ENCODE measurements at regions of chr11 and their contacts with region 1.

Region 1: GRCh38 chr11:124402326-124402922 is 3.6 kb upstream of the OR8B3 start:
- DNase-seq: peak; percentile 86
- ATAC-seq: peak; percentile 95
- H3K4me3 ChIP-seq: no peak overlapping the region
- H3K27ac ChIP-seq: no peak overlapping the region
- H3K4me1 ChIP-seq: peaks cover 3% of the 10 kb centered on the region; the same call in 1 of the 2 replicates
- H3K27me3 ChIP-seq: no peaks in the 10 kb centered on the region; the same call in 1 of the 2 replicates
- CTCF ChIP-seq: peak; percentile 86
- POLR2A ChIP-seq: no peak
- RAD21 ChIP-seq: peak; percentile 63

Region 2: GRCh38 chr11:124285610-124286344 is 116.6 kb before region 1 on chr11:
- CTCF ChIA-PET with region 1: no interaction called
- POLR2A ChIA-PET with region 1: no interaction called
- dilution Hi-C with region 1: no loop called
- in situ Hi-C with region 1: no loop called
- intact Hi-C with region 1: loop called (anchors 5 kb)
- DNase-seq: peak; percentile 75
- ATAC-seq: peak; percentile 94
- H3K4me3 ChIP-seq: no peak overlapping the region
- H3K27ac ChIP-seq: no peak overlapping the region
- H3K4me1 ChIP-seq: no peaks in the 10 kb centered on the region
- H3K27me3 ChIP-seq: no peaks in the 10 kb centered on the region
- CTCF ChIP-seq: no peak
- POLR2A ChIP-seq: no peak
- RAD21 ChIP-seq: no peak

Region 3: GRCh38 chr11:124470516-124471227 is 68.2 kb after region 1 on chr11:
- CTCF ChIA-PET with region 1: no interaction called
- POLR2A ChIA-PET with region 1: no interaction called
- dilution Hi-C with region 1: no loop called
- in situ Hi-C with region 1: no loop called
- intact Hi-C with region 1: no loop called
- DNase-seq: no peak
- ATAC-seq: no peak
- H3K4me3 ChIP-seq: no peak overlapping the region
- H3K27ac ChIP-seq: no peak overlapping the region
- H3K4me1 ChIP-seq: no peaks in the 10 kb centered on the region
- H3K27me3 ChIP-seq: peaks cover 10% of the 10 kb centered on the region
- CTCF ChIP-seq: no peak
- POLR2A ChIP-seq: no peak
- RAD21 ChIP-seq: no peak

Region 4: GRCh38 chr11:124586238-124586860 is 183.9 kb after region 1 on chr11:
- CTCF ChIA-PET with region 1: interaction called, 10 read pairs
- POLR2A ChIA-PET with region 1: no interaction called
- dilution Hi-C with region 1: no loop called
- in situ Hi-C with region 1: no loop called
- intact Hi-C with region 1: no loop called
- DNase-seq: peak; percentile 66
- ATAC-seq: no peak; the same call in 1 of the 2 replicates
- H3K4me3 ChIP-seq: no peak overlapping the region
- H3K27ac ChIP-seq: no peak overlapping the region
- H3K4me1 ChIP-seq: no peaks in the 10 kb centered on the region
- H3K27me3 ChIP-seq: peaks cover 25% of the 10 kb centered on the region
- CTCF ChIP-seq: peak; percentile 76
- POLR2A ChIP-seq: no peak
- RAD21 ChIP-seq: peak; percentile 60

Region 5: DNA sequence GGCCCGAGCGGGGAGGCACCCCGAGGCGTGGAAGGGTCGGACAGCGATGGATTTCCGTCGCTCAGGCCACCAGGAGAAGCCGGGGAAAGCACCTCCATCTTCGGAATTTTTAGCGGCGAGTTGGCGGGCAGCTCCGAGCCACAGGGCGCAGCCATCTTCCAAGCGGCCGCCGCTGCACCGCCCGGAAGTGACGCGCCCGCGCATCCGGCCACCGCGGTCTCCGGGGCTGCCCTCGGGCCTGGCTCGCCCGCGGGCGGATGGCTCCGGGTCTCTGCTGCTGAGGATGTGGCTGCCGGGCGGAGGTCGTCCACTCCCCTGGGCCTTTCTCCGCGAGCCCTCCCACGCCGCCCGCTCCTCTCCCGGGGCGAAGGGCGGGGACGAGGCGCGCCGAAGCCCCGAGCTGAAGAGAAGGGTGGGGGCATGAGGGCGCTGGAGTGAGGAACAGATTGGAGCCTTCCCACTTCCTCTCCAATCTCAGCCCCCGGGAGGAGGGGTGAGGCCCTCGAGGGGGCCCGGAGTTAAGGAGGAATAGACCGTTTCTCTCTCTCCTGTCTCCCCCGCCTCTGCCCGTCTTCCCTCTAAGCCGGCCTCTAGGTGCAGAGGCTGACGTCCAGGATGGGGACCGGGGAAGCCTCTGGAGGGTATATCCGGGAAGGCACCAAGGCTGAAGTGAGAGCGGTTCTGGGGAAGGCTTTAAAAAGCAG is 398.0 kb after region 1 on chr11 and contains the start of gene MSANTD2:
- CTCF ChIA-PET with region 1: no interaction called
- POLR2A ChIA-PET with region 1: no interaction called
- dilution Hi-C with region 1: no loop called
- in situ Hi-C with region 1: loop called (anchors 25 kb)
- intact Hi-C with region 1: no loop called
- DNase-seq: peak; percentile 79
- ATAC-seq: peak; percentile 92
- H3K4me3 ChIP-seq: peak within 1 kb of the TSS; percentile 68
- H3K27ac ChIP-seq: peak within 1 kb of the TSS; percentile 99
- H3K4me1 ChIP-seq: peaks cover 2% of the 10 kb centered on the region
- H3K27me3 ChIP-seq: no peaks in the 10 kb centered on the region
- CTCF ChIP-seq: no peak
- POLR2A ChIP-seq: peak; percentile 93
- RAD21 ChIP-seq: no peak
- total RNA-seq, gene MSANTD2: 5.0 and 6.4 TPM in 2 replicates

Region 6: DNA sequence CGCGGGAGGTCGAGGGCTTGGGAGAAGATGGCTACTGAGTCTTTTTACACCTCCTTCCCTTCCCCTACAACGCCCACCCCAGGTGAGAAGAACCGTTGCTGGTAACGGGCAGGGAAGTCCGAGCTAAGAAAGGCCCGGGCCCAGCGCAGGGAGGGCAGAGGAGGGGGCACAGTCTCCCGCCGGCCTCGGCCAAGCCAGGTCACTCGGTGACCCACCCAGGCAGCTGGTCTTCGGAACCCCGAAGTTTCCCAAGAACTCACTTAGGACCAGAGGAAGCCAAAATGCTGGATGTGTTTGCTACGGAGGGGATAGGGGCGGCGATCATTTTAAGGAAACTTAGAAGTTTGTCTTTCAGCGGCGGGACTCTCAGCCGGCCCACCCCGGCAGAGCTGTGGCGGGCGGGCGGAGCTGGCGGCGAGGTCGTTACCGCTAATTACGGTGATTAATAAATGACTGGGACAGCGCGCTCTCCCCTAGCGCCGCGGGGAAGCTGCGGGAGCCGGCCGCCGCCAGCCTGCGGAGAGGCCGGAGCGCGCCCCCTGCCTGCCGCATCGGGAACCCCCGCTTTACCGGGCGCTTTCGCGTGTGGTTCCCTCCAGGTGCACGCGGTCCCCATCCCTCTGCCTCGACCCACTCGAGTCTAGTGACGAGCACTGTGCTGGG is 463.6 kb after region 1 on chr11:
- CTCF ChIA-PET with region 1: no interaction called
- POLR2A ChIA-PET with region 1: no interaction called
- dilution Hi-C with region 1: no loop called
- in situ Hi-C with region 1: no loop called
- intact Hi-C with region 1: loop called (anchors 10 kb)
- DNase-seq: peak; percentile 15
- ATAC-seq: peak; percentile 56
- H3K4me3 ChIP-seq: peak overlapping the region; percentile 20; the same call in 1 of the 2 replicates
- H3K27ac ChIP-seq: no peak overlapping the region
- H3K4me1 ChIP-seq: peaks cover 2% of the 10 kb centered on the region
- H3K27me3 ChIP-seq: peaks cover 97% of the 10 kb centered on the region
- CTCF ChIP-seq: peak; percentile 69
- POLR2A ChIP-seq: no peak
- RAD21 ChIP-seq: peak; percentile 42; the same call in 1 of the 2 replicates